ENCODE measurements at regions of chr10 and their contacts with region 1.

Region 1: GRCh38 chr10:35336084-35336831 is at the start of gene CCNY:
- DNase-seq: peak; percentile 81 to 94
- H3K4me3 ChIP-seq: peak within 1 kb of the TSS; percentile 78 to 99 (median 92)
- H3K27ac ChIP-seq: peak within 1 kb of the TSS; percentile 87 to 96 (median 91)
- H3K4me1 ChIP-seq: peaks cover 53 to 86% (median 70%) of the 10 kb centered on the region in 4 donors
- H3K27me3 ChIP-seq: no peaks in the 10 kb centered on the region
- CTCF ChIP-seq: no peak
- EP300 ChIP-seq: no peak
- POLR2A ChIP-seq: peak in 1 of 4 donors; percentile 25
- total RNA-seq, gene CCNY: 5.8 to 99.6 (median 60.0) TPM

Region 2: DNA sequence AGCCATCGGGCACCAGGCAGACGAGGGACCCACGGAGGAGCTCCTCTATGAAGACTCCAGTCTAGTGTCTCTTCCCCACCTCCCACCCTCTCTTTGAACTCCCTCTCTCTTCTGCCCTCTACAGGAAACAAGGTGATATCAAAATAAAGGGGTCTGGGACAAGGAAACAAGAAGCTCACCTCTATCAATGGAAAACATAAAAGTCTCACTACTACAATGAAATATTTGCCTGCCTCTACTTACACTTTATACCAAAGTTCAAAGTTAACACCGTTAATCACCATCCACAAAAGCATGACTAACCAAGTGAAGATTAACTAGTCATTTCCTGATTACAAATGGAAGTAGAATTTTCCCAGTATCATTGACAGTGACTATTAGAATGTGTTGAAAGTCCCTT is 603.3 kb before region 1 on chr10:
- intact Hi-C with region 1: no loop called
- DNase-seq: no peak
- H3K4me3 ChIP-seq: no peak overlapping the region
- H3K27ac ChIP-seq: no peak overlapping the region
- H3K4me1 ChIP-seq: peaks cover 0 to 44% (median 21%) of the 10 kb centered on the region in 4 donors
- H3K27me3 ChIP-seq: no peaks in the 10 kb centered on the region
- CTCF ChIP-seq: no peak
- EP300 ChIP-seq: no peak
- POLR2A ChIP-seq: no peak

Region 3: GRCh38 chr10:35563261-35563891 is 227.1 kb after region 1 on chr10:
- intact Hi-C with region 1: loop called (anchors 10 kb)
- DNase-seq: peak; percentile 63 to 87
- H3K4me3 ChIP-seq: no peak overlapping the region
- H3K27ac ChIP-seq: no peak overlapping the region
- H3K4me1 ChIP-seq: peaks cover 15 to 33% (median 25%) of the 10 kb centered on the region in 4 donors
- H3K27me3 ChIP-seq: no peaks in the 10 kb centered on the region
- CTCF ChIP-seq: peak in 5 of 7 experiments; percentile 82 to 94 (median 91)
- EP300 ChIP-seq: no peak
- POLR2A ChIP-seq: no peak

Measured in stomach (tissue), 19 donors.